Testis (tissue), 5 donors: ENCODE measurements at regions of chr12 and their contacts with region 1.

Region 1: DNA sequence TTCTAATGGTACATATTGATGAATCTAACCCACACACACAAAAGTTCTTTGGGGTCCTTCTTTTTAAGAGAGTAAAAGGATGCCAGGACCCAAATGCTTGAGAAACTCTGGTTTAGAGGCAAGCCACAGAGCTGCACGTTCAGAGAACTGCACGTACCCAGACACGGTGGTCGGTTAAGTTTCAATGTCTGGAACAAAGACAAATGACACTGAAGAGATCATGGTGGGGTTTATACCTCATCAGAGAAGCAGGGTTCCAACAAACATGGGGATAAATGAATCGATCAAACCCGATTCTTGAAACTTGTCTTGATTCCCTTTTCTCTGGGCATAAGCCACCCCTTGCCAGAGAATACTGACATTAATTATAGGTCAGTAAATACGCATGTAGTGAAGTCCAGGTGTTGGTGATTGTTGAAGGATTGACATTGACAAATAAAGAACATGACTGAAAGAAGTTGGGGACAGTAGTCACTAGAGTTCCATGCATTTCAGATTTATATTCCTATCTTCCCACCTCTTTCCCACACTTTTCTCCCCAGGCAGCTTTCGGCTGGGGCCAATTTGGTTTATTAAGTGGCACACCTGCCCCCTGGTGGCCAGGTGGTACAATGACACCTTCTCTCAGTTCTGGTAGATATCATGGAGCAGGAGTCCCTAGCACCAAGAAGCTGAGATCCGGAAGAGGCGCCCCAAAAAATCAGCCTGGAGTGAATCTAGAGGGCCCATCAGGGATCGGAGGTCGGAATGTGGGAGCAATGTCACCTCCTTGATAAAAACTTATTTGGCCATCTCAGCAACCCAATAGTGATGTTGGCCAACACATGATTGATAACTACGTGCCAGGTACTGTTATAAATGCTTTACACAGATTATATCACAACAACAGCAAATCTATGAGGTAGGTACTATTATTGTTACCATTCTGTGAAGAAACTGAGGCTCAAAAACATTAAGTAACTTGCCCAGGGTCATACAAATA is 17.8 kb upstream of the HDAC7 start:
- DNase-seq: peak; percentile 84
- H3K4me3 ChIP-seq: no peak overlapping the region
- H3K27ac ChIP-seq: no peak overlapping the region
- H3K4me1 ChIP-seq: peaks cover 4% of the 10 kb centered on the region
- H3K27me3 ChIP-seq: no peaks in the 10 kb centered on the region
- CTCF ChIP-seq: peak; percentile 97 to 99 (median 97)
- POLR2A ChIP-seq: no peak

Region 2: DNA sequence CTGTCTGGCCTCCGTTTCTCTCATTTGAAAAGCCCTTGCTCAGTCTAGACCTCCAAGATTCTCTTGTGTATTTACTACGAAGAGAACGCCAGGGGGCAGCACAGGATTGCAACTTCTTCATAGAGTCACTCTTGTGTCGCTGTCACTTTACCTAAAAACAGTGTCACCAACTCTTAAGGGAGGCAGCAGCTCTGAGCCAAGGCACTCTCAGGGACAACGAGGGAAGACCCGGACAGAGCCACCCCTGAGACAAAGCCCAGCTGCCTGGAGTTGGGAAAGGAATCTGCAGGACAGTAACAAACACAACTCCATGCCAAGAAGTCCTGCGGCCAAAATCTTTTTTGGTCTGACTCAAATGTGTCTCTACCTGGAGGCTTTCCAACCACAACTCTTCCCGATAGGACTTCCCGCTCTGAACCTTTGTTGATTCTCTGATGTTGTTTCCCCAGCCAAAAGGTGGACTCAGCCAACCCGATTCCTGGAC is 122.0 kb before region 1 on chr12:
- intact Hi-C with region 1: loop called (anchors 10 kb)
- DNase-seq: peak; percentile 83
- H3K4me3 ChIP-seq: no peak overlapping the region
- H3K27ac ChIP-seq: peak overlapping the region; percentile 76 to 92
- H3K4me1 ChIP-seq: peaks cover 36% of the 10 kb centered on the region
- H3K27me3 ChIP-seq: no peaks in the 10 kb centered on the region
- CTCF ChIP-seq: peak; percentile 65 to 93 (median 92)
- POLR2A ChIP-seq: no peak

Region 3: DNA sequence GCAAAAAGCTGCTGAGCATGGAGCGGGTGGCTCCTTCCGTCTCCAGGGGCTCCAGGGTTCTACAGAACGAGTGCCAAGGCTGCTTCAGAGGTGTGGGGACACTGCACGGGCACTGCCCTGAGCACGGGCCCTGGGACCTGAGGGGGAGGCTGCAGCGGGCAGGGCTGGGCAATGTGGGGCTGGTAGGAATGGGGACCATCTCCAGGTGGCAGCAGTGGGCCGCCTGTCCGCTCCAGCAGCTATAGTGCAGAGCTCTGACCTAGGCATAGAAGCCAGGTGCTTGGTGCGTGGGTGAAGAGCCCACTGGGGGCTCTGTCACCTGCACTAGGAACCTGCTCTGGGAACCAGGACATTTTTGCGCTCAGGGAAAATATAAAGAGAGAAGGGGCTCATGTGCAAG is 40.0 kb before region 1 on chr12:
- intact Hi-C with region 1: loop called (anchors 5 kb)
- DNase-seq: no peak
- H3K4me3 ChIP-seq: no peak overlapping the region
- H3K27ac ChIP-seq: no peak overlapping the region
- H3K4me1 ChIP-seq: peaks cover 25% of the 10 kb centered on the region
- H3K27me3 ChIP-seq: no peaks in the 10 kb centered on the region
- CTCF ChIP-seq: peak in 2 of 3 experiments; percentile 19 to 27
- POLR2A ChIP-seq: no peak